ENCODE measurements at regions of chr2 and their contacts with region 1.

Region 1: DNA sequence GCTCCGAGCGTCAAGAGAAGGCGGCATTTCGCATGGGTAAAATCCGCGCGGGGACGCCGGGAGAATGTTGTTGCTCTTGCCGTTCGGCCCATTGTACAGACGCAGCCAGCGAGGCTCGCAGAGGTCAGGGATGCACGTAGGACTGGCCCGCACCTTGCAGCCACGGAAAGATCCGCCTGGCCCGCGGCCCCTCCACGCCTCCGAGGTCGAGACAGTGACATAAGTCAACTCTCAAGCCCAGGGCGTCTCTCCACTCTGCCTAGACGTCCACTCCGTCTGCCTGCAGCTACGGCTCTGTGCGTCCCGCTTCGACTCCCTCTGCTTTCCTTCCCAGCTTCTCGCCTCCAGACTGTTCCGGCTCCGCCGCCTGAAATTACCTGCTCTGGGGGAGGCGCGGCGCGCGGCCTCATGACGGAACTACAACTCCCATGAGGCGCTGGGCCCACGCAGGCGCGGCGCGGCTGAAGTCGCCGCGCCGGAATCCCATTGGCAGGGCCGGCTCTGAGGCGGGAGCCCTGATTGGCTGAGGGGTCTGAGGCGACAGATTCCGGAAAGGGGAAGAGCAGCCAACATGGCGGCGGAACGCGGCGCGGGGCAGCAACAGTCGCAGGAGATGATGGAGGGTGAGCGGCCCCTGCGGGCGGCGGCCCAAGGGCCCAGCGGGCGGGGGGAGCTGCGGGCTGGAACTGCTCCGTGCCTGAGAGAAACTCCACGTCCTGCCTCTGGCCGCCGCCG is at the start of gene PPP1R7:
- DNase-seq: peak; percentile 97
- ATAC-seq: peak; percentile 82
- H3K4me3 Mint-ChIP-seq: peak within 1 kb of the TSS; percentile 89
- H3K27ac Mint-ChIP-seq: peak within 1 kb of the TSS; percentile 84
- H3K4me1 Mint-ChIP-seq: peaks cover 44% of the 10 kb centered on the region
- H3K27me3 Mint-ChIP-seq: no peaks in the 10 kb centered on the region
- total RNA-seq, gene PPP1R7: 86.4 to 99.5 TPM

Region 2: GRCh38 chr2:241081643-241082340 is 68.3 kb before region 1 on chr2:
- CTCF ChIA-PET with region 1: interaction called, 20 read pairs
- DNase-seq: no peak
- ATAC-seq: no peak
- H3K4me3 Mint-ChIP-seq: no peak overlapping the region
- H3K27ac Mint-ChIP-seq: no peak overlapping the region
- H3K4me1 Mint-ChIP-seq: no peaks in the 10 kb centered on the region
- H3K27me3 Mint-ChIP-seq: no peaks in the 10 kb centered on the region

Region 3: DNA sequence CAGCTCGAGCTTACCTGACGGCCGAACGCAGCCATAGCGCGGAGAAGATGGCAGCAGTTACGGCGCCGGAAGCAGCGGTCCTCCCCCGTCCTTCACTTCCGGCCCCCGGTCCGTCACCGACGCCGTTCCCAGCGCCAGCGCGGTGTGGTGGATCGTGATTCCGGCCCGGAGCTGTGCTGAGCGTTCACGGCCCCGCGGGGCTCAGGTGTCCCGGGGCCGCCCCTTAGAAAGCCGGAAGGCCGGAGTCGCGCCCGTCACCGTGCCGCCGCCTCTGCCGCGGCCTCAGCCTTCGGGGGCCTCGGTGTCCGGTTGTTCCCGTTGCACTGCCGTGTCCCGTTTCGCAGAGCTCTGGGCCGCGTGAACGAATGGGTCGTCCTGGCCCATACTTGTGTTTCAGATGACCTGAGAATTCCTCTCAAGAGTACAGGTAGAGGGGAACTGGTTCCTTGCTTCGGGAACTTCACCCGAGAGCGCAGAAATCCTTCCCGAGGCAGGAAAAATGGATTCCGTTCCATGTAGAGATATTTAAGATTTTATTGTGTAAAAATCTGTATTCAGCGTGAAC is 47.8 kb before region 1 on chr2 and contains the start of gene MTERF4:
- CTCF ChIA-PET with region 1: interaction called, 16 read pairs
- DNase-seq: peak; percentile 91
- ATAC-seq: peak; percentile 97
- H3K4me3 Mint-ChIP-seq: peak within 1 kb of the TSS; percentile 96
- H3K27ac Mint-ChIP-seq: peak within 1 kb of the TSS; percentile 97
- H3K4me1 Mint-ChIP-seq: peaks cover 38% of the 10 kb centered on the region
- H3K27me3 Mint-ChIP-seq: no peaks in the 10 kb centered on the region
- total RNA-seq, gene MTERF4: 31.5 to 33.0 TPM

Region 4: DNA sequence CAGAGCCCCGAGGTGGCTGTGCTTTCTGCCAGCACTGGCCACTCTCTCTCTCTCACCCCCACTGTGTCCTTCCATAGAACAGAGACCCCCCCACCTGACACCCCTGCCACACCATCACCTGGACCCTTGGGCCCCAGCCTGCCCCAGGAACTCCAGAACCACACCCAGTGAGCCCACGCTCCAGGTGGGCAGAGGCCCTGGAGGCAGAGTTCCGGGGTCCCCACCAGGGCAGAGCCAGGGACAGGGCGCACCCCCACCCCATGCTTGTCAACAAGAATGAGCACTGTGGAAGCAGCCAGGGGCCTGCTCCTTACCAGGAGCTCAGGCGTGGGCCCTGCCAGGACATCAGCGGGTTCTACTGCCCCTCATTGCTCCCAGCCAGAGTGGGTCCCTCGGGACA is 15.4 kb before region 1 on chr2:
- CTCF ChIA-PET with region 1: no interaction called
- DNase-seq: no peak
- ATAC-seq: no peak
- H3K4me3 Mint-ChIP-seq: no peak overlapping the region
- H3K27ac Mint-ChIP-seq: no peak overlapping the region
- H3K4me1 Mint-ChIP-seq: peaks cover 3% of the 10 kb centered on the region
- H3K27me3 Mint-ChIP-seq: no peaks in the 10 kb centered on the region

Measured in activated CD8-positive, alpha-beta memory T cell treated with anti-CD3 and anti-CD28 coated beads, Interleukin-2, amount 10 ng/mL, durations not matched to agents 7 days and 5 days (primary cell).